ENCODE measurements at regions of chr13 and their contacts with region 1.

Region 1: DNA sequence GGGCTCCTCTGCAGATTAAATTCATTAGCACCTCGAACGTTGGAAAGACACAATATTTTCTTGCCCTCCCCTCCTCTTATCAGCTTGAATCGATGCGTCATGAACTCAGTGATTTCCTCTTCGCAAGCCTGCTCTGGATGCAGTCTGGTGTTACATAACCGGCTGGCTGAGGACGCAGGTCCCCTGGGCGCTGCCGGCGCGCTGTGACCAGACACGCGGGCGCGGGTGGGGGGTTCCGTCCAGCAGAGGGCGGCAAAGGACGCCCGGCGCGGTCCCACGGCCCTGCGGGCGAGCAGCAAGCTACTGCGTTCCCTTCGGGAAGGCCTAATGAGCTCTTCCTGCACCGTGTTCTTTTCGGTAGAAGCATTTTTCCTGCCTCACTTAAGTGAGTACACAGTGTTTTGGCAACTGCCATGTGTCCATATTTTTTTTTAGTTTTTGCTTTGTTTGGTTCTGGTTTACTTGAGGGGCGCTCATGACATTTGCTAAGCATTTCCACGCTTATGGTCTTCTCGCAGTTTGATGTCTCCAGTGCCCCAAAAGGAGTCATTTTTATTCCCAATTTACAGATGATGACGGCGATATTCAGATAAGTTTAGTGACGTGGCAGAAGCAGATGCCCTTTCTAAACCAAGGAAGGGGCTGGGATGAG is 112.2 kb upstream of the MBNL2 start:
- DNase-seq: peak; percentile 91
- H3K4me3 ChIP-seq: peak overlapping the region in 1 of 2 experiments; percentile 24; a peak in 2 of 4 replicates
- H3K27ac ChIP-seq: peak overlapping the region in 1 of 2 experiments; percentile 60; a peak in 1 of 4 replicates
- H3K4me1 ChIP-seq: peaks cover 24 to 36% of the 10 kb centered on the region in 2 experiments
- H3K27me3 ChIP-seq: no peaks in the 10 kb centered on the region
- CTCF ChIP-seq: peak; percentile 94
- EP300 ChIP-seq: peak; percentile 27 to 72; a peak in 2 of 4 replicates
- RAD21 ChIP-seq: peak; percentile 97

Region 2: DNA sequence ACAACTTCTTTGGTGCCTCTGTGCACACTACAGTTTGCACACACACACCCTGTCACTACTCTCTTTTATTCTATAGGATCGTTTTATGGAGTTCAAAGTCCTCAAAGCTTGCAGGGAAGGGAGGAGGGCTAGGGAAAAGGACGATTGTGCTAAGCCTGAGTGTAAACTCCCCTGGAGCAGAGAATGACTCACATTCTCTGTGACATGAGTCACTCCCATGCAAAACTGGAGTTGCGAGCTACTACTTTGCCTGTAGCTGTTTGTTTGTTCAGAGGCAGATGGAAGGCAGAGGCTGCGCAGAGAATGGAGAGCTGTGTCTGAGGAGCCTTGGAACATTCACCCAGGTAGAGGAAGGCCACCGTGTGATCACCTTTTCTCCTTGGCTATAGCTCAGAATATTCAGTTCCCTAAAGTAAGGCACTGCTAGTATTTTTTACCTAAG is 31.6 kb after region 1 on chr13:
- CTCF ChIA-PET with region 1: interaction called, 11 read pairs
- POLR2A ChIA-PET with region 1: no interaction called
- DNase-seq: no peak
- H3K4me3 ChIP-seq: peak overlapping the region; percentile 25 to 28; a peak in 2 of 4 replicates
- H3K27ac ChIP-seq: peak overlapping the region; percentile 43 to 67; a peak in 3 of 4 replicates
- H3K4me1 ChIP-seq: peaks cover 1 to 7% of the 10 kb centered on the region in 2 experiments
- H3K27me3 ChIP-seq: no peaks in the 10 kb centered on the region
- CTCF ChIP-seq: no peak
- EP300 ChIP-seq: peak in 1 of 2 experiments; percentile 61; a peak in 1 of 4 replicates
- RAD21 ChIP-seq: no peak

Region 3: DNA sequence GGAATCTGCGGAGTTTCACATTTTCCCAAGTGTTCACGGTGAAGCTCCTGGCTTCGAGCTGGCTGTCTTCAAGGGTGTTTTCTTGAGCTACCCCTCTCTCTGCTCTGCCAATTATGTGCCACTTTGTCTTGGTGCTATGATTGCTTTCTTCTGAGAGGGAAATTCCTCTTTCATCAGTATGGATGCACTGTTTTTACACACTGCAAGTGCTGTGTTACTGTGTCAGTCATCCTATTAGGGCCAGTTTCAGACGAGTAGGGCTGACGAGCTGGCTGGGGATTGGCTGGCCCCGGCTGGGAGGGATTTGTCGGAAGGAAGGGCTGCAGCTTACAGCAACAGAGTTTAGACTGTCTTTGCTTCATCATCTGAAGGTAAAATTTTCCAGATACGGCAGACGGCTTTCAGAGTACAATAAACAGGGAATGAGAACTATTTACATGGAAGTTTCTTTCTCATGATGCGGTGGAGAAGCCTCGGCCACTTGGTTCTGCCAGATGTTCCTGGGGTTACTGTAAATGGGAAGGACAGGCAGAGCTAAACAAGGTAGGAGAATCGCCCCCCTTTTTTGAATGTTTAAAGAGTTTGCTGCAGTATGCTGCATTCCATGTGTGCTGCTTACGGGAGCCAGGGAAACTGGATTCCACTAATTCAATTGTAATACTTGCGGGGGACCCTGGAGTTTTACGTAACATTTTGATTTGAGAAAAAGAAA is 112.2 kb after region 1 on chr13 and contains the start of gene MBNL2:
- CTCF ChIA-PET with region 1: interaction called, 80 read pairs
- POLR2A ChIA-PET with region 1: interaction called, 7 read pairs
- DNase-seq: peak; percentile 80
- H3K4me3 ChIP-seq: peak within 1 kb of the TSS; percentile 75 to 77
- H3K27ac ChIP-seq: peak within 1 kb of the TSS; percentile 95 to 97
- H3K4me1 ChIP-seq: peaks cover 14 to 28% of the 10 kb centered on the region in 2 experiments
- H3K27me3 ChIP-seq: no peaks in the 10 kb centered on the region
- CTCF ChIP-seq: no peak
- EP300 ChIP-seq: no peak
- RAD21 ChIP-seq: no peak
- polyA plus RNA-seq, gene MBNL2: 24.5 and 27.9 TPM in 2 replicates

Region 4: GRCh38 chr13:97298816-97299215 is 188.8 kb after region 1 on chr13:
- CTCF ChIA-PET with region 1: interaction called, 27 read pairs
- POLR2A ChIA-PET with region 1: no interaction called
- DNase-seq: no peak
- H3K4me3 ChIP-seq: no peak overlapping the region
- H3K27ac ChIP-seq: peak overlapping the region; percentile 60 to 99
- H3K4me1 ChIP-seq: peaks cover 37 to 46% of the 10 kb centered on the region in 2 experiments
- H3K27me3 ChIP-seq: no peaks in the 10 kb centered on the region
- CTCF ChIP-seq: no peak
- EP300 ChIP-seq: no peak
- RAD21 ChIP-seq: no peak

Region 5: GRCh38 chr13:97344265-97345175 is 234.6 kb after region 1 on chr13:
- CTCF ChIA-PET with region 1: interaction called, 194 read pairs
- POLR2A ChIA-PET with region 1: no interaction called
- DNase-seq: peak; percentile 67
- H3K4me3 ChIP-seq: no peak overlapping the region
- H3K27ac ChIP-seq: peak overlapping the region; percentile 61 to 65
- H3K4me1 ChIP-seq: peaks cover 10 to 11% of the 10 kb centered on the region in 2 experiments; a peak in 3 of 4 replicates
- H3K27me3 ChIP-seq: no peaks in the 10 kb centered on the region
- CTCF ChIP-seq: peak; percentile 83
- EP300 ChIP-seq: peak in 1 of 2 experiments; percentile 49; a peak in 1 of 4 replicates
- RAD21 ChIP-seq: peak; percentile 89

Region 6: DNA sequence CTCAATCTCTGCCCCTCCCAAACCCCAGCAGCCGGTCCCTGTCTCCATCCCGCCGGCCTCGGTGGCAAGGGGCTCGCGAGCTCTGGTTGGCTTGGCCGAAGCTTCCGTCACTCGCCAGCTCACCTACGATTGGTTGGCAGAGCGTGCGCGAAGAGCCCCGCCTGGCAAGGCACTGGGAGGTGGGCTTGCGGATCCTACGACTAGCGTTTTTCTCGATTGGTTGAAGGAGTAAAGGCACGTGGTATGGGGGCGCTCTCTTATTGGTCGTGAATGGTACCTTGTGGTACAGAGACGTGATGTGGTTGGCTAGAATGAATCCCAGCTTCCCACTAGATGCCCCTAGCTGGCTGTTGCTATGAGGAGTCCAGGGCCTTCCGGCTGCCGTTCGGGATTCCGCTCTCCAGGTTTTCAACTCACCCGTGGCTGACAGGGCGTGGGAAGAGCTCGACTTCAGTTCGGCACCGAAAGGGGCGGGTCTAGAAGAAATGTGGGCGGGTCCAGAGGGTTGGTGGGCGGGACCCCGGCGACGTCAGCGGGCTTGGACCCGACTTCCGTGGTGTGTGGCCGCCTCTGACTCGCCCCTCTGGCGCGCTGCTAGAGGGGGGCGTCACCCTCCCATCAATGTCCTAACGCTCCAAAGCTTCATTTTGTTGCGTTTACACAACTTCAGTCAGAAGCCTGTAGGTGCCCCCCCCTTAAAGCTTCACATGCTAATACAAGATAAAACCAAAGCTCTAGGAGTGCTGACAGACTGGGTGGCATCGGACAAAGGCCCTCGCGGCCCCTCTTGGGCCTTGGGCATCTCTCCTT is 323.2 kb after region 1 on chr13:
- CTCF ChIA-PET with region 1: interaction called, 11 read pairs
- POLR2A ChIA-PET with region 1: interaction called, 4 read pairs
- DNase-seq: peak; percentile 83
- H3K4me3 ChIP-seq: peak overlapping the region; percentile 94 to 96
- H3K27ac ChIP-seq: peak overlapping the region; percentile 99 to 100
- H3K4me1 ChIP-seq: peaks cover 16 to 20% of the 10 kb centered on the region in 2 experiments; a peak in 3 of 4 replicates
- H3K27me3 ChIP-seq: no peaks in the 10 kb centered on the region
- CTCF ChIP-seq: no peak
- EP300 ChIP-seq: peak; percentile 74 to 97; a peak in 3 of 4 replicates
- RAD21 ChIP-seq: no peak

Measured in SK-N-SH (cell line).